WTC11 (cell line): ENCODE measurements at regions of chr12 and their contacts with region 1.

Region 1: GRCh38 chr12:10722905-10723866 is at the start of gene YBX3:
- DNase-seq: peak; percentile 79
- ATAC-seq: peak; percentile 70
- H3K4me3 Mint-ChIP-seq: peak within 1 kb of the TSS; percentile 97
- H3K27ac Mint-ChIP-seq: peak within 1 kb of the TSS; percentile 55
- H3K4me1 Mint-ChIP-seq: peaks cover 44% of the 10 kb centered on the region
- H3K27me3 Mint-ChIP-seq: peaks cover 13% of the 10 kb centered on the region
- CTCF ChIP-seq: no peak
- total RNA-seq, gene YBX3: 396 to 411 TPM (median 409 TPM) in 3 replicates

Region 2: DNA sequence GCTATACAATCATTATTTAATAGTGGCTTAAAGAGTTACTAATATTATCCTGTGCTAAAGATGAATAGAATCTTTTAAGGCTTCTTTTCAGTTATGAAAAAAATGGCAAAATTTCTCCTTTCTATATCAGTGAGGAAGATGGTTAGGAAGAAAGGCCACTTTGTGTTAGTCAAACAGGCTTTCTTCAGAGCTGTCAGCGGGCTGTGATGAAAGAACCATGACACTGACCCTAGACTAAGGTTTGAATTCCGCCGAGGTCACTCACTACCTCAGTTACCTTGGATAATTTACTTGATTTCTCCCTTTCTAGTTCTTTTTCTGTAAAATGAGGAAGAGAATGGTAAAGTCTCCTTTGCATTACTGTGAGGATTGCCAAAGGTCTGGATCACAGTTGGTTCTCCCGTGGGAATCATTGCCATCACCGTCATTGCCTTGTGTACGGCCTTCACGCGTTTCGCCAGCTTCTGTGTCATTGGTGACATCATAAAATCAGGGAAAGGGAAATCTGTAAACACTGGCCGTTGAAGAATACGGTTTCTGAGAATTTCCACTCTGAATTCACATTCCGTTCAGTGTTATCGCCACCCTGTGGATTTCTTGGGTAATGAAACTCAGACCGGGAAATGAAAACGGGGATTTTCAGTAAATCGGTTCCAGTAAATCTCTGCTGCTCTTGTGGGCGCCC is 26.7 kb after region 1 on chr12:
- CTCF ChIA-PET with region 1: interaction called, 12 read pairs
- POLR2A ChIA-PET with region 1: no interaction called
- DNase-seq: peak; percentile 66
- ATAC-seq: peak; percentile 95
- H3K4me3 Mint-ChIP-seq: peak overlapping the region; percentile 66
- H3K27ac Mint-ChIP-seq: no peak overlapping the region
- H3K4me1 Mint-ChIP-seq: no peaks in the 10 kb centered on the region
- H3K27me3 Mint-ChIP-seq: peaks cover 9% of the 10 kb centered on the region
- CTCF ChIP-seq: peak; percentile 66

Region 3: DNA sequence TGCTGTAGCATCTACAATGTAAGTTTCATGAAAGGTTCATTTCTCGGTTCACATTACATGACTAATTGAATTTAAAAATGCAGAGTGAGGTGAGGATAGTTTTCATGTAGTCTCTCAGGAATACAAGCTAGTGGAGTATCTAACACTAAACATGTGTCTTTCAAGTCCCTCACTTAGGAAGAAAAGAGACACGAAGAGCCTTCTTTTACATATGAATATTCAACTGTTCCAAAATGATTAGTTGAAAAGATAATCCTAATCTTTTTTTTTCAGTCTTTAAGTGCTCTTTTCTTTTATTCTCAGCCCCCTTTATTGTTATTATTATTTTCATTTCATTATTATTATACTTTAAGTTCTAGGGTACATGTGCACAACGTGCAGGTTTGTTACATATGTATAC is 115.3 kb after region 1 on chr12:
- CTCF ChIA-PET with region 1: no interaction called
- POLR2A ChIA-PET with region 1: no interaction called
- DNase-seq: no peak
- ATAC-seq: no peak
- H3K4me3 Mint-ChIP-seq: no peak overlapping the region
- H3K27ac Mint-ChIP-seq: no peak overlapping the region
- H3K4me1 Mint-ChIP-seq: peaks cover 4% of the 10 kb centered on the region
- H3K27me3 Mint-ChIP-seq: no peaks in the 10 kb centered on the region
- CTCF ChIP-seq: no peak